GM10248 (cell line): ENCODE measurements at regions of chr2 and their contacts with region 1.

Region 1: GRCh38 chr2:234550511-234551107 is 53.7 kb upstream of the ARL4C start:
- DNase-seq: peak; percentile 72
- CTCF ChIP-seq: peak; percentile 90

Region 2: DNA sequence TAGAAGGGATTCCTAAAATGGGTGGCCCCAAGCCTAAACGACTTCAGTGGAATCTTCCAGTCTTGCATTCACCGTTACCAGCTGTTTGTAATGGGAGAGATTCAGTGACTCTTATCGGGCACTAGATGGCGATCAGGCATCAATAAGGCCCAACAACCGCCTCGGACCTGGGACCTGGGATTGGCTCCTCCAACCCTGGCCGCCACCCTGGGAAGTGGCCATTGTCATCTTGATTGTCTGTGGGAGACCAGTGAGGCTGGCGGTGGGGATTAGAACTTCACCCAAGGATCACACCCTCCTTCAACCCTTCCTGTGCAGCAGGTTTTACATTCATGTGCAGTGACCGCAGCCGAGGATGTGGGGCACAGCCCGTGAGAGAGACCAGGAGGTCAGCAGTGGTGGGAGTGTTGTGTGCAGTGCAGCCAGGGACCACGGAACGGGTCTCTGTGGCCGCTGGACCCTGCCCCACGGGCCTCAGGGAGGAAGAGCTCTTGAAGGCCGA is 414.8 kb before region 1 on chr2:
- CTCF ChIA-PET with region 1: interaction called, 30 read pairs
- POLR2A ChIA-PET with region 1: no interaction called
- DNase-seq: peak; percentile 68
- CTCF ChIP-seq: peak; percentile 65

Region 3: DNA sequence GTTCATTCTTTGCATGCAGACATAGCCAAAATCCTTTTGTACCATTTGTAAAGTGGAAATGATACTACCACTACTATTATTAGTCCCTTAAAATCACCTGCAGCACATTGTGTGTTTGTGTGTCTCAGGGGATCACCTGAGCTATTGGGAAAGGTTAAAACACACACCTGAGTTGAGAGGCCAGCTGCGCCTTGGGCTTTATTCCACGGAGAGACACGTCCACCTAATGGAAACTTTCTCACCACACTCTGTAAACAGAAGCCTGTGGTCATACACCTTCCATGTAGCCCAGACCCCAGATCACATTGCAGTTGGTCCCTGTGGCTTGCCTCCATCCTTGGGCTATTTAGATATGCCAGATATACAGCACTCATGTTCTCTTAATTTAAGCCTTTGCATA is 319.4 kb after region 1 on chr2:
- CTCF ChIA-PET with region 1: no interaction called
- POLR2A ChIA-PET with region 1: interaction called, 13 read pairs
- DNase-seq: no peak
- CTCF ChIP-seq: no peak